Calu3 (cell line): ENCODE measurements at regions of chr14 and their contacts with region 1.

Region 1: DNA sequence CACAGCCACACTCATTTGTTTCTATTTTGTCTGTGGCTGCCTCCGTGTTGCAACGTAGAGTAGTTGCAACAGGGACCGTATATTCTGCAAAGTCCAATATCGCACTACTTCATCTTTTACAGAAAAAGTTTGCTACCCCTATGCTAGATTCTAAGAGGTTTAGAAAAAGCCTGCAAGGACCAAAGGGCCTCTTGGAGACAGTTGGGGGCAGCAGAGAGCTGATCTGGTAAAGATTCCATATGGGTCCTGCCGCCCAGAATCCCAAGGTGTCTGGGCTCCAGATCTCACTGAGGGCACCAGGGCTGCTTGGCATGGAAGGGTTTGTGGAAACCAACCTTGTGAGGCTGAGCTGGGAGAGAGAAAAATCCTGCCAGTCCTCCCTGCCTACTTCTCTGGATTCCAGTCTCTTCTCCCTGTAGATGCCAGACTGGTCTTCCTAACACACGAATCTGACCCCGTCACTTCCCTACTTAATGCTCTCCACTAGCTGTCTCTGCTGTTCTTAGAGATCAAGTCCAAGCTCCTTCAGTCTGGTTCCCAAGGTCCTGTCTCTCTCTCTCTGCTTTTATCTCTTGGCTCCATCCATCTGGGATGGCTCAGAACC is 74.6 kb downstream of the GLRX5 start:
- DNase-seq: peak; percentile 46
- H3K4me3 Mint-ChIP-seq: no peak overlapping the region
- H3K27ac Mint-ChIP-seq: no peak overlapping the region
- H3K4me1 Mint-ChIP-seq: no peaks in the 10 kb centered on the region
- H3K27me3 Mint-ChIP-seq: peaks cover 87% of the 10 kb centered on the region
- CTCF ChIP-seq: peak; percentile 33

Region 2: DNA sequence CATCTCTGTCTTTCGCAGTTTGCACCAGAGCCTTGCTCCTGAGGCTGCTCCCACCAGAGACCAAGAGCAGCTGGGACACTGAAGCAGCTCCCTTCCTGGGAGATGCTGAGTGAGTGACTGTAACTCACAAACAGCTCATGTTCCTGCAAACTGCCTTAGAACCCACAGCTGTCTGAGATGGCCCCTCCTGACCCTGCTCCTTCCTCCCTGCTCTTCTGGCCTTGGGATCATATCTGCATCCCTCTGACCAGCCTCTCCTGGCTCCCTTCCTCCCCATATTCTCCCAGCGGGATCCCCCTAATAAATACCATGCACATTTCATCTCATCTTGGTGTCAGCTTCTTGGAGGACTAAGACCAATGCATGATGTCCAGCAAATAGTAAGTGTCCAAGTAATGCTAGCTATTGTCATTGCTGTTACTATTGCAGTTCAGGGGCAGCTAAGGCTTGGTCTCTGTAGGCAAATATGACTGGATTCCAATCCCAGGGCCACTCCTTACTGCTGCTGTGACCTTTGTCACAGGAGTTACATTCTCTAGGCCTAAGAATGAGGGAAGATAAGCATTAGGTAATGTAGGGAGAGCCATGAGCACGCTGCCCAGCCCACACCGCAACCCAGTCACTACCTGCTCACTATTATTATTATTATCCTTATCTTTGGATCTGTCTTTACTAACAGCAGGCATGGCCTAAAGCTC is 140.9 kb before region 1 on chr14:
- CTCF ChIA-PET with region 1: no interaction called
- intact Hi-C with region 1: no loop called
- DNase-seq: peak; percentile 49
- H3K4me3 Mint-ChIP-seq: no peak overlapping the region
- H3K27ac Mint-ChIP-seq: peak overlapping the region; percentile 22
- H3K4me1 Mint-ChIP-seq: peaks cover 10% of the 10 kb centered on the region
- H3K27me3 Mint-ChIP-seq: peaks cover 3% of the 10 kb centered on the region
- CTCF ChIP-seq: no peak

Region 3: DNA sequence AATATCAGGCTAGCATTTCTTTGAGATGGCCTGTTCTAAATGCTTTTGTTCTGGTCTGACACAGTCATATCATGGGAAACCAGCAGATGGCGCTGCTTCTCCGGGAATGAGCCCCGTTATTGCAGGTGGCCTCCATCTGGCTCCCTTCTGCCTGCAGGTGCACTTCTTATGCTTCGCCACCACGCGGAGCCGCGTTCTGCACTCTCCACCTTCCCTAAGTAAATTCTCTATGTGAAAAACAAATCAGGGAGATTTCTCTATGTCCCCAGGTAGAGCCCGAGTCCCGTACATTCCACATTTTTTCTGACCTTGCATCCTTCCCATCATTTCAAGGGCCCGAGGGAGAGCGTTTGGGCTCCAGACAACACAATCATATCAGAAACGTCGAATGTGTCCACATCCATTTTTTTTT is 48.5 kb before region 1 on chr14:
- CTCF ChIA-PET with region 1: interaction called, 3 read pairs
- intact Hi-C with region 1: loop called (anchors 2 kb)
- DNase-seq: peak; percentile 90
- H3K4me3 Mint-ChIP-seq: peak overlapping the region; percentile 33
- H3K27ac Mint-ChIP-seq: no peak overlapping the region
- H3K4me1 Mint-ChIP-seq: peaks cover 7% of the 10 kb centered on the region
- H3K27me3 Mint-ChIP-seq: peaks cover 16% of the 10 kb centered on the region
- CTCF ChIP-seq: peak; percentile 88

Region 4: GRCh38 chr14:95575840-95576473 is 33.5 kb before region 1 on chr14:
- CTCF ChIA-PET with region 1: no interaction called
- intact Hi-C with region 1: no loop called
- DNase-seq: no peak
- H3K4me3 Mint-ChIP-seq: no peak overlapping the region
- H3K27ac Mint-ChIP-seq: no peak overlapping the region
- H3K4me1 Mint-ChIP-seq: no peaks in the 10 kb centered on the region
- H3K27me3 Mint-ChIP-seq: peaks cover 68% of the 10 kb centered on the region
- CTCF ChIP-seq: no peak

Region 5: DNA sequence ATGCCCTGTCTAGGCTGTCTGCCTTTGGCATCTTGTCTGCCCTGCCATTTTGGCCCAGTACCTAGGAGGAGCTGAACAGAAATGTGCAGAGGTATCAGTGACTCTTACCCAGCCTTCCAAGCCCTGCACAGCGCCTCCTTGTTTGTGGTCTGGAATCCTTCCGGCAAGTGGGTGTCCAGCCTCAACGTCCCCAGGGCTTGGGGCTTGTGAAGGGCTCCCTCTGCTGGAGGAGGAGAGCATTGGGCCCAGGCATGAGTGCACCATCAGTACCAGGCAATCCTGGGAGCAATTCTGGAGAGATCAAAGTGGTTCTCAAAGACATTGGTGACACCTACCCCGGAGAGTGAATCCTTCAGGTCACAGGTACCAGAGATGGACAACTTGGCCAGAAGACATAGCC is 74.3 kb after region 1 on chr14:
- CTCF ChIA-PET with region 1: interaction called, 5 read pairs
- intact Hi-C with region 1: loop called (anchors 5 kb)
- DNase-seq: peak; percentile 42
- H3K4me3 Mint-ChIP-seq: no peak overlapping the region
- H3K27ac Mint-ChIP-seq: no peak overlapping the region
- H3K4me1 Mint-ChIP-seq: no peaks in the 10 kb centered on the region
- H3K27me3 Mint-ChIP-seq: peaks cover 46% of the 10 kb centered on the region
- CTCF ChIP-seq: peak; percentile 51

Region 6: GRCh38 chr14:95741038-95741490 is 131.6 kb after region 1 on chr14:
- CTCF ChIA-PET with region 1: no interaction called
- intact Hi-C with region 1: no loop called
- DNase-seq: peak; percentile 14
- H3K4me3 Mint-ChIP-seq: no peak overlapping the region
- H3K27ac Mint-ChIP-seq: no peak overlapping the region
- H3K4me1 Mint-ChIP-seq: no peaks in the 10 kb centered on the region
- H3K27me3 Mint-ChIP-seq: peaks cover 62% of the 10 kb centered on the region
- CTCF ChIP-seq: no peak

Region 7: GRCh38 chr14:95774265-95775160 is 165.0 kb after region 1 on chr14:
- CTCF ChIA-PET with region 1: interaction called, 3 read pairs
- intact Hi-C with region 1: loop called (anchors 5 kb)
- DNase-seq: peak; percentile 59
- H3K4me3 Mint-ChIP-seq: no peak overlapping the region
- H3K27ac Mint-ChIP-seq: no peak overlapping the region
- H3K4me1 Mint-ChIP-seq: no peaks in the 10 kb centered on the region
- H3K27me3 Mint-ChIP-seq: peaks cover 89% of the 10 kb centered on the region
- CTCF ChIP-seq: peak; percentile 59